Activated CD4-positive, alpha-beta memory T cell treated with anti-CD3 and anti-CD28 coated beads for 36 hours (primary cell): ENCODE measurements at regions of chr15 and their contacts with region 1.

Region 1: GRCh38 chr15:63970621-63971426 is 75.5 kb downstream of the DAPK2 start:
- DNase-seq: peak; percentile 61
- H3K4me3 Mint-ChIP-seq: peak overlapping the region; percentile 35
- H3K27ac Mint-ChIP-seq: peak overlapping the region; percentile 89
- H3K4me1 Mint-ChIP-seq: peaks cover 36% of the 10 kb centered on the region
- H3K27me3 Mint-ChIP-seq: peaks cover 1% of the 10 kb centered on the region

Region 2: GRCh38 chr15:63939531-63940130 is 31.2 kb before region 1 on chr15:
- CTCF ChIA-PET with region 1: interaction called, 11 read pairs
- POLR2A ChIA-PET with region 1: interaction called, 5 read pairs
- intact Hi-C with region 1: loop called (anchors 2 kb)
- DNase-seq: peak; percentile 46
- H3K4me3 Mint-ChIP-seq: no peak overlapping the region
- H3K27ac Mint-ChIP-seq: peak overlapping the region; percentile 84
- H3K4me1 Mint-ChIP-seq: peaks cover 28% of the 10 kb centered on the region
- H3K27me3 Mint-ChIP-seq: no peaks in the 10 kb centered on the region

Region 3: GRCh38 chr15:63986751-63987341 is 16.0 kb after region 1 on chr15:
- CTCF ChIA-PET with region 1: interaction called, 4 read pairs
- POLR2A ChIA-PET with region 1: interaction called, 5 read pairs
- intact Hi-C with region 1: loop called (anchors 1 kb)
- DNase-seq: peak; percentile 20
- H3K4me3 Mint-ChIP-seq: no peak overlapping the region
- H3K27ac Mint-ChIP-seq: peak overlapping the region; percentile 38
- H3K4me1 Mint-ChIP-seq: peaks cover 13% of the 10 kb centered on the region
- H3K27me3 Mint-ChIP-seq: no peaks in the 10 kb centered on the region